ENCODE measurements at regions of chr22 and their contacts with region 1.

Region 1: GRCh38 chr22:43385770-43386641 is 25.8 kb upstream of the MPPED1 start:
- DNase-seq: peak; percentile 90

Region 2: DNA sequence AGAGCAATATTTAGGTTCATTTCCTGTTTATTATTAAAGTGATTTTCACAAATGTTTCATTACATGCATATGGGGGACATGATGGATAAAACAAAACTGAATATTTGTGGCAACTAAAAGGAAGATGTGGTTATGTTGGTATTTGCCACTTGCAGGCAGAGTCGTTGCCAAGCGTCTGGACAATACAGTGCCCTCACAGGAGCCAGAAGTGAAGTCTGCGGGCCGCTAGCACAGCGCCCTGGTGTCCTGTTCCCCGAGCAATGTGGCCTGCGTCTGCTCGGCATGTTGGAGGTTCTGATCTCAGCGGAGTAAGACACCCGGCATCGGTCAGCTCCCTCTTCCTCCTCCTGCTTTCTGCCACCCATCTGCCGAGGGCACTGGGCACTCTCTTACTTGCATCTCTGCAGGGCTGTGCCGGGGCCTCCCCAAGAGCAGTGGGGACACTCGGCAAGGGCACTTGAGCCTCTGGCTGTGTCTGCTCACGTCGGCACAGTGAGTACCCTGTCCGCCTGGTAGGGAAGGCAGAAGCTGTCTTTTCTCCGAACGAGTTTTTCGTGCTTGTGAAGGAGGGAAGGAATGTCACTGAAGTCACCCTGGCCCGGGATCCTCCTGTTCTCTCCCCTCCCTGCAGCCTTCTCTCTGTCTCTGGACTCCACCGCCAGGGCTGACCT is 188.6 kb before region 1 on chr22:
- CTCF ChIA-PET with region 1: no interaction called
- POLR2A ChIA-PET with region 1: no interaction called
- DNase-seq: no peak

Region 3: GRCh38 chr22:43273902-43274484 is 112.0 kb before region 1 on chr22:
- CTCF ChIA-PET with region 1: interaction called, 11 read pairs
- POLR2A ChIA-PET with region 1: interaction called, 4 read pairs
- DNase-seq: peak; percentile 78